ENCODE measurements at regions of chr9 and their contacts with region 1.

Region 1: DNA sequence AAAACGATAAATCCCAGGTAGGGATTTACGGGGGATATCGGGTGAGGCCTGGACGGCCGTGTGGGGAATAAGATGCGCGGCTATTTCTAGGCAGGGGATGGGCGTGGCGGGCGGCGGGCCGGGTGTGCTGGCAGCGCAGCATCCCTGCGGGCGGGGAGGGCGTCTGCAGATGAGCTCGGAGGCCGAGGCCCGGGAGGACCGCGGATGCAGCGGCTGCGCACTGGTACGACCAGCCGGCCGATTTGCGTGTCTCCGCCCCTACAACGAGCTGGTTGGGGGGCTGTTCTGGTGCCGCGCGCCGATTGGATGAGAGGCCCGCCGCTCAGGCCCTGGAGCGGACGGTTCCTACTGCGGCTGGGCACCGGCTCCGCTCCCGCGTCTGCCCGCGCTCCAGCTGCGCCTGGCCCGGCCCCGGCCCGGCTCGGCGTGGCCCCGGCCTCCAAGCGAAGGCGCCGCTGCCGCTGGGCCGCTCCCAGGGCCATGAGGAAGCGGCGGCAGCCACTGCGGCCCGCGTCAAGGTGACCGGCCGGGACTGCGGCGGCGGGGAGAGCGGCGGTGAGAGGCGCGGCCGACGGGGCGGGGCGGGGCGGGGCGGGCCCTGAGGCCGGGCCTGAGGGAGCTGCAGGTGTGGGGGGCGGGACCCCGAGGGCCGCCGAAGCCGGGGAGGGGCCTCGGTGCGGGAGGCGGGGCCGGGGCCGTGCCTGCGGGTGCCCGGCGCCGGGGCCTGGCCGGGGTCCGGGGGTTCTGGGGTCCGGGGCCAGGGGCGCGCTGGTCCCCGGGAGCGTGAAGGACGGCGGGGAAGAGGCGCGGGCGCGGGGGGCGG is at the start of gene RALGPS1:
- H3K4me3 Mint-ChIP-seq: peak within 1 kb of the TSS; percentile 42
- H3K27ac Mint-ChIP-seq: no peak within 1 kb of the TSS
- H3K4me1 Mint-ChIP-seq: peaks cover 11% of the 10 kb centered on the region
- H3K27me3 Mint-ChIP-seq: peaks cover 40% of the 10 kb centered on the region

Region 2: DNA sequence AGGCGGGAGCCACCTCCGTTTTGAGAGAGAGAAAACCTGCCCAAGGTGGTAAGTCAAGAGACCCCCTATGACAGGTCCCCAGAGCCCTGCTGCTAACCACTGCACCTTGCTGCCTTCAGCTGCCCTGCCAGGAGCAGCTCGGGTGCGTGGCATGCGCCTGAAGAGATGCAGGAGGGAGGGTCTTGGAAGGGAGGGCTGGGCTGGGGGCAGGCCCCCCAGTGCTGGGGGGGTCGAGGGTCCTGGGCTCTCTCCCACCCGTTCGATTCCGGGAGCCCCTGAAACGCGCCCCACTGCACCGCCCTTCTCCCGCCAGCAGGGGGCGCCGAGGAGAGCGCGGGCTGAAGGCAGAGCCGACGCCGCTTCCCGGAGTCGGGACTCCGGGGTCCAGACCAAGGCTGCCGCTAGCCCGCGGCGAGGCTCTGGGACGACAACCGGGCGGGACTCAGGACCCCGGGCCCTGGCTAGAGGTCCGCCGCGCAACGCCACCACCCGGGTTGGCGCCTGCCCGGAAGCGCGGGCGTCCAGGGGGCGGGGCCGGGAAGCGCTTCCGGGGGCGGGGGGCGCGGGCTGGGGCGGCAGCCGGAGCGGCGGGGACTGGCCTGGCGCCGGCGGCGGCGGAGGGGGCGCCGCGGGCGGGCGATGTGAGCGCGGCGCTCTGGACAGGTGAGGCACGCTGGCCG is 54.5 kb before region 1 on chr9 and contains the start of gene ZBTB34:
- intact Hi-C with region 1: loop called (anchors 1 kb)
- H3K4me3 Mint-ChIP-seq: peak within 1 kb of the TSS; percentile 83
- H3K27ac Mint-ChIP-seq: peak within 1 kb of the TSS; percentile 83
- H3K4me1 Mint-ChIP-seq: peaks cover 37% of the 10 kb centered on the region
- H3K27me3 Mint-ChIP-seq: no peaks in the 10 kb centered on the region

Region 3: GRCh38 chr9:127214421-127215267 is 300.0 kb after region 1 on chr9:
- intact Hi-C with region 1: no loop called
- H3K4me3 Mint-ChIP-seq: no peak overlapping the region
- H3K27ac Mint-ChIP-seq: no peak overlapping the region
- H3K4me1 Mint-ChIP-seq: peaks cover 11% of the 10 kb centered on the region
- H3K27me3 Mint-ChIP-seq: peaks cover 22% of the 10 kb centered on the region